ENCODE measurements at regions of chr2 and their contacts with region 1.

Region 1: DNA sequence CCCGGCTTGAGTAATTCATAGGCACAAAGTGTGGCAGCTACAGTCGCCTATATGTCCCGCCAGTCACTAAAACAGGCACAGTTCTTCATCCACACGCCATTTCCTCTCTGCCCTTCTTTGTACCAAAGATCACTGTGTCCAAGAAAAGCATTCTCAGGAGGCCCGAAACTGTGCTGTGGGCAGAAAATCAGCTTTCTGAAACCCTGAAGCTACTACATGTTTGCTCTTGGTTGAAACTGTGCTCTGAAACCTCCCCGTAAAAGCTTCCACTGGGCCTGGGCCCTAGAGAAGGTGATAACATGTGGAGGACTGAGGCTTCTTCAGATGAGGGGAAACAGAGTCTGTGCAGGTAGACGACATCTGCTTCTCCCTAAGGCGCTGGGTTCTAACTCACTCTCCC is 75.6 kb upstream of the ID2 start:
- DNase-seq: no peak
- ATAC-seq: no peak
- H3K4me3 ChIP-seq: no peak overlapping the region
- H3K27ac ChIP-seq: peak overlapping the region; percentile 47
- H3K4me1 ChIP-seq: peaks cover 52% of the 10 kb centered on the region
- H3K27me3 ChIP-seq: no peaks in the 10 kb centered on the region
- CTCF ChIP-seq: no peak

Region 2: DNA sequence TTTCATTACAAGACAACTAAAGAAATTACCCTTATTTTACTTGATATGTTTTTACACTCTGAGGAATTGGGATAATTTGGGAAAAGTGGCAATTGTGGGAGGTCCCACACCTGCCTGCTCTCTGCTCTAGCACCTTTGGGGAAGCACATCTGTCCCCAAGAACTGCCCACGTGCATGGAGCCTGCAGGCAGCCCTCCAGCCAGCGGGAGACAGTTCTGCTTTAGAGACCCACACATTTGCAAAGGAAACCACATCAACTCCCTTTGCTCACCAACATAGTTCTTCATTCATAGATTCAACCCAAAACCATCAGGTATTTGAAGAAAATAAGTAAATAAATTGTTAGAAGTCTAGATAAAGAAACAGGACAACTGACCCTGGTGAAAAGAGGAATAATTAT is 164.2 kb before region 1 on chr2:
- CTCF ChIA-PET with region 1: no interaction called
- POLR2A ChIA-PET with region 1: no interaction called
- intact Hi-C with region 1: loop called (anchors 10 kb)
- DNase-seq: no peak
- ATAC-seq: no peak
- H3K4me3 ChIP-seq: no peak overlapping the region
- H3K27ac ChIP-seq: no peak overlapping the region
- H3K4me1 ChIP-seq: peaks cover 14% of the 10 kb centered on the region
- H3K27me3 ChIP-seq: no peaks in the 10 kb centered on the region
- CTCF ChIP-seq: no peak

Region 3: GRCh38 chr2:8534729-8535468 is 71.3 kb before region 1 on chr2:
- CTCF ChIA-PET with region 1: no interaction called
- POLR2A ChIA-PET with region 1: no interaction called
- intact Hi-C with region 1: no loop called
- DNase-seq: no peak
- ATAC-seq: no peak
- H3K4me3 ChIP-seq: no peak overlapping the region
- H3K27ac ChIP-seq: no peak overlapping the region
- H3K4me1 ChIP-seq: peaks cover 28% of the 10 kb centered on the region
- H3K27me3 ChIP-seq: no peaks in the 10 kb centered on the region
- CTCF ChIP-seq: no peak

Region 4: DNA sequence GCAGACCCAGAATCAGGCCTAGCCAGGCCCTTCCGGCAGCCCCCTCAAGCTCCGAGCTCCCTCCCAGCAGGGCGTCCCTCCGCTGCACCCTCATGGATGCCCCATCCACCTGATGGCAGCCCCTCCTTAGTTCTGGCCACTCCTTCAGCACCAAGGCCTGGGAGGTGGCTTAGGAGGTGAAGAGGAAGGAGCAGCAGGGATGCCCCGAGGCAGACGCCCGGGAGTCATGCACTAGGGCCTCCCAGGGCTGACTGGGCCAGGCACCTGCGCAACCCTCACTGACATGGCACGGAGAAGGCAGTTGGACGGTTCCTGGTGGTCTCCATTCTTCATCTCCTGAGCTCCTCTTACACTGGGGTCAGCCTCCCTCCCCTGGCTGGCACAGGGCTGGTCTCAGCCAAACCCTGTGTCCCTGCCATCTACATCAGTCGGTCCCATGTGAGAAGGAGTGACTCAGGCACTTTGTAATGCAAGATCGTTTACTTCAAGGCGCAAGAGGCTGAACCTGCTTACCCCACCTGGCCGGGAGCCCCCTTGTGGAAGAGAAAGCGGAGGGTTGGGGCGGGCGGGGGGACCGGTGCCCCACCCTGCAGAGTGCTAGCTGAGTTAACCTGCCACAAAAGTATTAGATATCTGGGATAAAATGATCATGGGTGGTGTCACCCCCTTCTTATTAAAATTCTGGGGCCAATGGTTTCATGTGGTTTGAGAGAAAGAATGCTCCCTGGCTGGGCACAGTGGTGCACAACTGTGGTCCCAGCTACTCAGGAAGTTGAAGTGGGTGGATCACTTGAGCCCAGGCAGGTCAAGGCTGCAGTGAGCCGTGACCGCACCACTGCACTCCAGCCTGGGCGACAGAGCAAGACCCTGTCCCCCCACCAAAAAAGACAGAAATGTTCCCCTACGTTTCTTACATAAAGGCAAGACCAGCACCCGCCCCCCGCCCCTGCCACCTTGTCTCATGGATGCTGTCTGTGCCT is 22.3 kb after region 1 on chr2:
- CTCF ChIA-PET with region 1: no interaction called
- POLR2A ChIA-PET with region 1: no interaction called
- intact Hi-C with region 1: loop called (anchors 2 kb)
- DNase-seq: peak; percentile 39
- ATAC-seq: no peak
- H3K4me3 ChIP-seq: no peak overlapping the region
- H3K27ac ChIP-seq: no peak overlapping the region
- H3K4me1 ChIP-seq: peaks cover 37% of the 10 kb centered on the region
- H3K27me3 ChIP-seq: no peaks in the 10 kb centered on the region
- CTCF ChIP-seq: 0 out of 2 replicates have a peak, but pooled peaks have one; percentile 13

Measured in PC-3 (cell line).